ENCODE measurements at regions of chr6 and their contacts with region 1.

Region 1: GRCh38 chr6:118372413-118372812 is 175.7 kb upstream of the PLN start:
- DNase-seq: peak; percentile 53
- ATAC-seq: peak; percentile 89

Region 2: GRCh38 chr6:118298476-118299427 is 73.7 kb before region 1 on chr6:
- intact Hi-C with region 1: loop called (anchors 5 kb)
- DNase-seq: no peak
- ATAC-seq: no peak

Region 3: GRCh38 chr6:118509009-118509617 is 136.7 kb after region 1 on chr6:
- intact Hi-C with region 1: loop called (anchors 10 kb)
- DNase-seq: no peak
- ATAC-seq: no peak